Mammary epithelial cell (primary cell): ENCODE measurements at regions of chr6 and their contacts with region 1.

Region 1: GRCh38 chr6:73413102-73413501 is 18.5 kb downstream of the DDX43 start:
- DNase-seq: no peak
- H3K4me3 ChIP-seq: no peak overlapping the region
- H3K27ac ChIP-seq: no peak overlapping the region
- H3K4me1 ChIP-seq: no peaks in the 10 kb centered on the region
- H3K27me3 ChIP-seq: no peaks in the 10 kb centered on the region
- CTCF ChIP-seq: no peak

Region 2: DNA sequence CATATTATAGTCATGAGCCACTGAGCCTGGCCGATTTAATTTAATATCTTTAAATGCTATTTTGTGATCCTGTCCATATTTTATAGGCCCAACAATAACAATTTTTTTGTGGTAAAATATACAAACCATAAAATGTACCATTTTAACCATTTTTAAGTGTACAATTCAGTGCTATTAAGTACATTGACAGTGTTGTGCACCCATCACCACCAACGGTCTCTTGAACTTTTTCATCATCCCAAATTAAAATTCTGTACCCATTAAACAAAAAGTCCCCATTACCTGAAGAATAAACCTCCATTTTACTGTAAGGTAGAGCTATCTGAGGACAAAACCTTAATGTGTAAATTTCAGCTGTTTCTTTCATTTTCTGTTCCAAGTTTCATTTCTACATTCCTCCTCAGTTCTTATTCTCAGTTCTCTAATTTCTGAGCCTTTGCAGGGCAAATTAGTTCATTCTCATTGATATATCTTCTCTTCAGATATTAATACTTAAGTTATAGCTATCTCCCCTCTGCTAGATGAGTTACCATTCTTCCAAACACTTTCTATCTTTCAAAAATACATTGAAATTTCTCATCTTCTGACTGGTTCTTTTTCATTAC is 58.7 kb after region 1 on chr6:
- CTCF ChIA-PET with region 1: no interaction called
- dilution Hi-C with region 1: no loop called
- in situ Hi-C with region 1: no loop called
- intact Hi-C with region 1: no loop called
- DNase-seq: no peak
- H3K4me3 ChIP-seq: no peak overlapping the region
- H3K27ac ChIP-seq: no peak overlapping the region
- H3K4me1 ChIP-seq: no peaks in the 10 kb centered on the region
- H3K27me3 ChIP-seq: no peaks in the 10 kb centered on the region
- CTCF ChIP-seq: no peak

Region 3: GRCh38 chr6:73497915-73498314 is 84.8 kb after region 1 on chr6:
- CTCF ChIA-PET with region 1: no interaction called
- dilution Hi-C with region 1: loop called (anchors 5 kb)
- in situ Hi-C with region 1: no loop called
- intact Hi-C with region 1: no loop called
- DNase-seq: no peak
- H3K4me3 ChIP-seq: no peak overlapping the region
- H3K27ac ChIP-seq: no peak overlapping the region
- H3K4me1 ChIP-seq: no peaks in the 10 kb centered on the region
- H3K27me3 ChIP-seq: no peaks in the 10 kb centered on the region
- CTCF ChIP-seq: no peak